ENCODE measurements at regions of chr3 and their contacts with region 1.

Region 1: DNA sequence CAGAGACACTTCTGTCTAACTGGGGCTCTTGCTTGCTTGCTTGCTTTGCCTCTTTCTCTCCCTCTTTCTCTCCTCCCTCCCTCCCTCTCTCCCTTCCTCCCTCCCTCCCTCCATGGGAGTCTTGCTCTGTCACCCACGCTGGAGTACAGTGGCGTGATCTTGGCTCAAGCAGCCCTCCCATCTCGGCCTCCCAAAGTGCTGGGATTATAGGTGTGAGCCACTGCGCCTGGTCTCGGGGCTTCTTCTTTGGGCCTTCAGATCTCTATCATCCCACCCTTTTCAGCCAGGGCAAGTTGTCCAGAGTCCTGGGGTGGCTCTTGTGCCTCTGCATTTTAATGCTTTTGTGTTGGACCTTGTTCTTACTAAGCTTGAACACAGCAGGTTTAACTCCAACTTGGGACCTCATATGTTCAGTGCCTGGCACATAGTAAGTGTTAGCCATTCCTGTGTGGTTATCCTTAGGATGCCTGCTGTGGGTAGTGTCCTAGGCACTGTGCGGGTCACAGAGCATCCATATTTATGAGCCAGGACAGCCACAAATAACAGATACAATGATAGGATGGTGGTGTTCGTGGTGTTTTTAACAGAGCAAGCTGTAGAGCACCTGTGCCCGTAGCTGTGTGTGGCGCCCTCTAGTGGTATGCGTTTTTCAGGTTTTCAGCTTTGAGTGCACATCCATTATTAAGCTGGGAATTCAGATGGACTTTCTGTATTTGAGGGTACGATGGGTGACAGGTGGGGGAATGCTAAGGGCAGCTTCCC is 75.1 kb downstream of the CCK start:
- DNase-seq: peak in 2 of 3 donors; percentile 48 to 73
- ATAC-seq: peak; percentile 71 to 79 (median 76)
- H3K4me3 ChIP-seq: no peak overlapping the region
- H3K27ac ChIP-seq: peak overlapping the region in 1 of 3 donors; percentile 43
- H3K4me1 ChIP-seq: peaks cover 0 to 15% (median 7%) of the 10 kb centered on the region in 4 donors
- H3K27me3 ChIP-seq: no peaks in the 10 kb centered on the region
- CTCF ChIP-seq: peak; percentile 76 to 85 (median 83)
- POLR2A ChIP-seq: no peak

Region 2: GRCh38 chr3:42080452-42080891 is 110.4 kb before region 1 on chr3:
- intact Hi-C with region 1: no loop called
- DNase-seq: no peak
- ATAC-seq: peak; percentile 59 to 83 (median 74)
- H3K4me3 ChIP-seq: no peak overlapping the region
- H3K27ac ChIP-seq: peak overlapping the region; percentile 43 to 69 (median 66)
- H3K4me1 ChIP-seq: peaks cover 0 to 31% (median 7%) of the 10 kb centered on the region in 4 donors
- H3K27me3 ChIP-seq: no peaks in the 10 kb centered on the region
- CTCF ChIP-seq: no peak
- POLR2A ChIP-seq: no peak

Region 3: GRCh38 chr3:42118762-42119361 is 72.0 kb before region 1 on chr3:
- intact Hi-C with region 1: loop called (anchors 10 kb)
- DNase-seq: no peak
- ATAC-seq: peak; percentile 43 to 70 (median 54)
- H3K4me3 ChIP-seq: no peak overlapping the region
- H3K27ac ChIP-seq: no peak overlapping the region
- H3K4me1 ChIP-seq: peaks cover 0 to 20% (median 7%) of the 10 kb centered on the region in 4 donors
- H3K27me3 ChIP-seq: no peaks in the 10 kb centered on the region
- CTCF ChIP-seq: peak; percentile 20 to 45 (median 31)
- POLR2A ChIP-seq: no peak